ENCODE measurements at regions of chr5 and their contacts with region 1.

Region 1: GRCh38 chr5:16626663-16627264 is 10.0 kb upstream of the RETREG1 start:
- DNase-seq: peak; percentile 72
- ATAC-seq: peak; percentile 84
- H3K4me3 Mint-ChIP-seq: peak overlapping the region; percentile 58
- H3K27ac Mint-ChIP-seq: peak overlapping the region; percentile 96
- H3K4me1 Mint-ChIP-seq: peaks cover 55% of the 10 kb centered on the region
- H3K27me3 Mint-ChIP-seq: no peaks in the 10 kb centered on the region

Region 2: GRCh38 chr5:16345454-16345853 is 281.3 kb before region 1 on chr5:
- CTCF ChIA-PET with region 1: no interaction called
- POLR2A ChIA-PET with region 1: no interaction called
- DNase-seq: no peak
- ATAC-seq: no peak
- H3K4me3 Mint-ChIP-seq: no peak overlapping the region
- H3K27ac Mint-ChIP-seq: no peak overlapping the region
- H3K4me1 Mint-ChIP-seq: no peaks in the 10 kb centered on the region
- H3K27me3 Mint-ChIP-seq: peaks cover 2% of the 10 kb centered on the region

Region 3: GRCh38 chr5:16616536-16617273 is 10.1 kb before region 1 on chr5 and contains the start of gene RETREG1:
- CTCF ChIA-PET with region 1: interaction called, 42 read pairs
- POLR2A ChIA-PET with region 1: interaction called, 136 read pairs
- DNase-seq: peak; percentile 87
- ATAC-seq: peak; percentile 86
- H3K4me3 Mint-ChIP-seq: peak within 1 kb of the TSS; percentile 95
- H3K27ac Mint-ChIP-seq: no peak within 1 kb of the TSS
- H3K4me1 Mint-ChIP-seq: peaks cover 38% of the 10 kb centered on the region
- H3K27me3 Mint-ChIP-seq: no peaks in the 10 kb centered on the region
- total RNA-seq, gene RETREG1: 47.1 to 51.8 TPM

Region 4: GRCh38 chr5:16727755-16728325 is 101.1 kb after region 1 on chr5:
- CTCF ChIA-PET with region 1: no interaction called
- POLR2A ChIA-PET with region 1: no interaction called
- DNase-seq: no peak
- ATAC-seq: no peak
- H3K4me3 Mint-ChIP-seq: no peak overlapping the region
- H3K27ac Mint-ChIP-seq: no peak overlapping the region
- H3K4me1 Mint-ChIP-seq: peaks cover 16% of the 10 kb centered on the region
- H3K27me3 Mint-ChIP-seq: peaks cover 5% of the 10 kb centered on the region